HAP-1 (cell line): ENCODE measurements at regions of chr9 and their contacts with region 1.

Region 1: GRCh38 chr9:104968025-104968982 is 40.3 kb upstream of the ABCA1 start:
- DNase-seq: peak; percentile 68 to 91
- H3K4me3 ChIP-seq: peak overlapping the region; percentile 96
- H3K4me1 ChIP-seq: peaks cover 4% of the 10 kb centered on the region
- H3K27me3 ChIP-seq: no peaks in the 10 kb centered on the region

Region 2: GRCh38 chr9:104934691-104935500 is 33.4 kb before region 1 on chr9:
- in situ Hi-C with region 1: loop called (anchors 5 kb)
- DNase-seq: no peak
- H3K4me3 ChIP-seq: no peak overlapping the region
- H3K4me1 ChIP-seq: no peaks in the 10 kb centered on the region
- H3K27me3 ChIP-seq: no peaks in the 10 kb centered on the region